B cell (primary cell): ENCODE measurements at regions of chr3 and their contacts with region 1.

Region 1: GRCh38 chr3:121834696-121835464 is at the starts of genes EAF2 and IQCB1:
- DNase-seq: peak; percentile 99
- ATAC-seq: peak; percentile 97
- H3K4me3 ChIP-seq: peak within 1 kb of the TSS; percentile 83 to 97 (median 94)
- H3K4me3 Mint-ChIP-seq: peak within 1 kb of the TSS; percentile 89
- H3K27ac ChIP-seq: peak within 1 kb of the TSS; percentile 88 to 94
- H3K27ac Mint-ChIP-seq: peak within 1 kb of the TSS; percentile 88
- H3K4me1 ChIP-seq: peaks cover 22 to 46% of the 10 kb centered on the region in 2 donors
- H3K4me1 Mint-ChIP-seq: peaks cover 64% of the 10 kb centered on the region
- H3K27me3 ChIP-seq: no peaks in the 10 kb centered on the region
- H3K27me3 Mint-ChIP-seq: no peaks in the 10 kb centered on the region
- CTCF ChIP-seq: no peak
- total RNA-seq, gene EAF2: 31.1 and 35.0 TPM in 2 replicates
- total RNA-seq, gene IQCB1: 54.6 and 56.5 TPM in 2 replicates

Region 2: DNA sequence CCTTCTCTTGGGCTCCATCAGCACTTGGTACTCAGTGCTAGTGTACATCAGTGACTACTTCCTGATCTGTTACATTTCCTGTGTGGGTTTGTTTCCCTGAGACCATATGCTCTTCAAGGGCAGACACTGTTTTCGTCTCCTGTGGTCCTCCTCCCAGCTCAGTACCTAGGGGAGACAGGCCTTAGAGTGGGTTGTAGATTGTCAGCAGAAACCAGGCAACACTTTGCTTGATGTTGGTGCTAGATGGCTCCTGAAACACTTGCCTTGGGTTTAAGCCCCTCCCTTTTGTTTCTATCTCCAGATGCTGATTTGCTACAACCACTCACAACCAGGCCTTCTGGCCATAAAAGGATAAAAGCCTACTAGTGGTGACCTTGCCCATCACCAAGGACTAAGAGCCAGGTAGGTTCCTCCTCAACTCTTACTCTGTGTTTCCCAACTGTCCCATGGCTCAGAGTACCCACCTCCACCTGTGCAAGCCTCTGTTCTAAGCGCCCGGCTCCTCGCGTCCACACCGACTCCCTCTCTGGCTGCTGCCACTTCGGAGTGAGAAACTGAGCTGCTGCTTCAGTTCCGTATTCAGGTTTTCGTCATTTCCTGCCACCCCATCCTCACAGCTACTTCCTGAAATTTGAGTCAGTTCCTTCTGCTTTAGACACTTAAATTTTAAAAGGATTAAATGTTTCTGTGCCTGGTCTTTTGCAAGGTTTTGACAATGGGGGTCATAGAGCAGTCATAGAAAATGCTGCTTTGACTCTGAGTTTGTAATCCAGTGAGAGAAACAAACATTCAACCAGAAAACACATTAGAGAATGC is 174.3 kb before region 1 on chr3 and contains the start of gene HCLS1:
- CTCF ChIA-PET with region 1: no interaction called
- POLR2A ChIA-PET with region 1: no interaction called
- intact Hi-C with region 1: loop called (anchors 1 kb)
- DNase-seq: peak; percentile 91
- ATAC-seq: peak; percentile 84
- H3K4me3 ChIP-seq: peak within 1 kb of the TSS; percentile 59 to 92 (median 68)
- H3K4me3 Mint-ChIP-seq: peak within 1 kb of the TSS; percentile 97
- H3K27ac ChIP-seq: peak within 1 kb of the TSS; percentile 90 to 94
- H3K27ac Mint-ChIP-seq: peak within 1 kb of the TSS; percentile 98
- H3K4me1 ChIP-seq: peaks cover 34 to 39% of the 10 kb centered on the region in 2 donors
- H3K4me1 Mint-ChIP-seq: peaks cover 54% of the 10 kb centered on the region
- H3K27me3 ChIP-seq: no peaks in the 10 kb centered on the region
- H3K27me3 Mint-ChIP-seq: no peaks in the 10 kb centered on the region
- CTCF ChIP-seq: no peak
- total RNA-seq, gene HCLS1: 317 and 331 TPM in 2 replicates

Region 3: DNA sequence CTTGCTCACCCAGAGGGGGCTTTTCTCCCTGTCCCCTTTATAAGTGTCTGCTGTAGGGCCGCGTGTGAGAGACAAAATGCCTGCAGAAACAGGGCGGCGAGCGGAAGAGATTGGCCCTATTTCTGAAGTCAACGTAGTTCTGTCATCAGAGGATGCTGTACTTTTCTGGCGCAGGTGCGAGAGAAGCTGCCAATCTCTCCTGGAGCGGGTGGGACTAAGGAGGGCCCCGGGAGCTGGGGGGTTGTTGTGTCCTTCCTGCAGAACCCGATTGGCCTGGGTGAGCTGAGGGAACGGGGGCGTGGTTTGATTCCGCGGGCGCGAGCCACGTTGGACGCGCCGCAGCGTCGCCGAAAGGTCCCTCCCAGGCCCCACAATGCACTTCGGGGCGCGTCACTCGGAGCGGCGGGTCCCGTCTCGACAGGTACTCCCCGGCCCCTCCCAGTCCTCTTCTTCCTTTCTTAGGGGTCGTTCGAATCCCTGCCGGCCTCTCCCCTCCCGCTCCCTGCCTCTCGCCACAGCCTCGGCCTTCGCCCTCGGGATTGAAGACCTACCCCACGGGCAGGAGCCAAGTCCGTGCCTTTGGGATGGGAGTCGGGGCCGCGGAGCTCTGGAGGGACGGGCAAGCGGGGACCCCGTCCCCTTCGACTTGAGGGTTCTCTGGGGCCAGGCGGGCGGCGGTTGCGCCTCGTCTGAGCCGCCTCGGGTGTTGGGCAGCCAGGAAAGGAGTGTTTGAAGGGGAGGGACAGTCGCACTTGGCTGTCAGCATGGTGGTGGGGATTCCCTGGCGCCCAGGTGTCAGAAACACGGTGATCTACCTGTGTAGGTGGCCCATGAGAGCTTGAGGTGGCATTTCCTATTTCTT is 1366.9 kb after region 1 on chr3 and contains the start of gene SEC22A:
- CTCF ChIA-PET with region 1: no interaction called
- POLR2A ChIA-PET with region 1: no interaction called
- intact Hi-C with region 1: loop called (anchors 5 kb)
- DNase-seq: peak; percentile 95
- ATAC-seq: peak; percentile 96
- H3K4me3 ChIP-seq: peak within 1 kb of the TSS; percentile 86 to 99 (median 90)
- H3K4me3 Mint-ChIP-seq: peak within 1 kb of the TSS; percentile 95
- H3K27ac ChIP-seq: peak within 1 kb of the TSS; percentile 92 to 96
- H3K27ac Mint-ChIP-seq: peak within 1 kb of the TSS; percentile 94
- H3K4me1 ChIP-seq: peaks cover 13 to 18% of the 10 kb centered on the region in 2 donors
- H3K4me1 Mint-ChIP-seq: peaks cover 22% of the 10 kb centered on the region
- H3K27me3 ChIP-seq: no peaks in the 10 kb centered on the region
- H3K27me3 Mint-ChIP-seq: no peaks in the 10 kb centered on the region
- CTCF ChIP-seq: no peak
- total RNA-seq, gene SEC22A: 16.1 and 19.3 TPM in 2 replicates